Dendritic cell treated with granulocyte-macrophage colony-stimulating factor and Interleukin-4, amounts not matched to agents 40 ng/mL and 50 ng/mL, for 4 days (primary cell): ENCODE measurements at regions of chr7 and their contacts with region 1.

Region 1: GRCh38 chr7:77238703-77239136 is 39.1 kb upstream of the FGL2 start:
- H3K4me3 Mint-ChIP-seq: peak overlapping the region; percentile 67
- H3K27ac Mint-ChIP-seq: peak overlapping the region; percentile 92
- H3K4me1 Mint-ChIP-seq: peaks cover 69% of the 10 kb centered on the region
- H3K27me3 Mint-ChIP-seq: no peaks in the 10 kb centered on the region

Region 2: GRCh38 chr7:77222065-77222464 is 16.7 kb before region 1 on chr7:
- intact Hi-C with region 1: loop called (anchors 2 kb)
- H3K4me3 Mint-ChIP-seq: no peak overlapping the region
- H3K27ac Mint-ChIP-seq: peak overlapping the region; percentile 46
- H3K4me1 Mint-ChIP-seq: peaks cover 57% of the 10 kb centered on the region
- H3K27me3 Mint-ChIP-seq: no peaks in the 10 kb centered on the region